H1 (cell line): ENCODE measurements at regions of chr17 and their contacts with region 1.

Region 1: GRCh38 chr17:50397111-50397918 is at the start of gene LRRC59:
- DNase-seq: peak; percentile 23 to 98
- H3K4me3 ChIP-seq: peak within 1 kb of the TSS; percentile 64 to 92 (median 80)
- H3K27ac ChIP-seq: no peak within 1 kb of the TSS; the same call in 1 of the 2 replicates
- H3K4me1 ChIP-seq: no peaks in the 10 kb centered on the region; a peak in 3 of 7 replicates
- H3K27me3 ChIP-seq: no peaks in the 10 kb centered on the region
- CTCF ChIP-seq: peak; percentile 97 to 100 (median 98)
- EP300 ChIP-seq: 0 out of 3 replicates have a peak, but pooled peaks of 1 of the 2 experiments have one; percentile 13
- POLR2A ChIP-seq: peak; percentile 44 to 89
- RAD21 ChIP-seq: peak; percentile 19 to 52; a peak in 3 of 4 replicates
- total RNA-seq, gene LRRC59: 117 TPM in 2 replicates

Region 2: DNA sequence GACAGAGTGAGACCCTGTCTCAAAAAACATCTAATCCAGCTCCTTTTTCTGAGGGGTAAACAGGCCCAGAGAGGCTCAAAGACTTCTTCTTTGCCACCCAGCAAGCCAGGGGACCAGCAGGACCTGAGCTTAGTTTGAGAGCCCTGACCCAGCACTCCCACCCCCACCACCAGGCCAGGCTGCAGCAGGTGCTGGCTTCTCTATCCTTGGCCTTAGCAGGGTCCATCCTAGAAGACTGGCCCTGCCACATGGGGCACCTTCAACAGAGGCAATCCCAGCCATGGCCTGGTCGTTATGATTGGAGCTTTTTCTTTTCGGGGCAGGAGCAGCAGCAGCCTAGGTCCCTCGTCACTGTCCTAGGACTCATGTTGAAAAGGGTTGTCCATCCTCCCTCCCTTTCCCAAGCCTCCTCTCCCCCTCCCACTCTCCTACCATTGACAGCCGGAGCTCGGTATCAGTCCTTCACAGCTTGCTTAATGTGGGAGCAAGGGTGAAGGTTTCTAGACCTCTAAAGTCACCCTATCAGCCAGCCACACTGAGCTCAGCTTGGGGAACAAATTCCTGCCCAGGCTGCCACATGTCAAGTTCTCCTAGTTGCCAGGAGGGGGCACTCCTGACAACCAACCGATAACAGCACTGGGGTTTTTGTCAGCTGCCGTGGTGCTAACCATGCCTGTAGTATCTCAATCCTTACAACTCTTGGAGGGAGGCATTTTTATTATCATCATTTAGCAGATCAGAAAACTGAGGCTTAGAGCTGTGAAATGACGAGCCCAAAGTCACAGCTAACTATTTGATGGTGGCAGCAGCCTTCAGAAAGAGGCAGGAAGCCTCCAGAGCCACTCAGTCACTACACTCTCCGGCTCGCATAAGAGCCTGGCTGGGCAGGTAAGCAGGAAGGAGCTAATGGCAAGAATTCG is 35.5 kb before region 1 on chr17:
- CTCF ChIA-PET with region 1: interaction called, 42 read pairs
- POLR2A ChIA-PET with region 1: interaction called, 313 read pairs
- DNase-seq: peak; percentile 34 to 67
- H3K4me3 ChIP-seq: no peak overlapping the region
- H3K27ac ChIP-seq: no peak overlapping the region
- H3K4me1 ChIP-seq: peaks cover 0 to 27% (median 11%) of the 10 kb centered on the region in 4 experiments; a peak in 6 of 7 replicates
- H3K27me3 ChIP-seq: no peaks in the 10 kb centered on the region
- CTCF ChIP-seq: peak; percentile 63 to 85 (median 79)
- EP300 ChIP-seq: no peak
- POLR2A ChIP-seq: no peak; a peak in 1 of 3 replicates
- RAD21 ChIP-seq: peak; percentile 53 to 65

Region 3: DNA sequence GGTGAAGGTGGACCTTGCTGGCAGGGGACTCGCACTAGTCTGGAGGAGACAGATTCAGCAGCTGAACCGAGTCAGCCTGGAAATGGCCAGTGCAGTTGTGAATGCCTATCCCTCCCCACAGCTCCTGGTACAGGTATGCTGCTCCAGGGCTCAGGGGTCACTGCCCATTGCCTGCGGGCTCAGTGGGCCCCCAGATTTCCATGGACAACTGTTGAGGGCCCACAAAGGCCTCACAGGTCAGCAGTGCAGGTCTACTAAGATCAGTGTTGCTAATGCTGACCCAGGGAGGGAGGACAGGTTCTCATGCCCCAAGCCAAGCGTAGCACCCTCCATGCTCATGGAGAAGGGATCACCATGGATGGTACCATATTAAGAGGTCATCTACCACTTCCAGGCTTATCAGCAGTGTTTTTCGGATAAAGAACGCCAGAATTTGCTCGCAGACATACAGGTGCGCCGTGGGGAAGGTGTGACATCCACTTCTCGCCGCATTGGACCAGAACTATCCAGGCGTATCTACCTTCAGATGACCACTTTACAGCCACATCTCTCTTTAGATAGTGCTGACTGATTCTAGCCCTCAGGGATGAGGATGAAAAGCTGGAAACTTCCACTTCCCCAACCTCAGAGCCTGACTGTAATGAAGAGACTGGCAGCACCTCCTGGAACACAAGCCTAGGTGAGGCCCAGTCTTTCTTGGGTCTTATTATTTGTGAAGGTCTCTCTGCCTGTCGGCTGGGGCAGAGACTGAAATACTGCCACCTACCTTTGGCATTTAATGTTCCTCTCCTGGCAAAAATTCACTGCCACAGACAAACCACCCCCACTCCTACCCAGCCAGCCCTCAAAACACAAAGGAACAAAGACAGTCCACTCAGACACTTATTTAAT is 16.7 kb before region 1 on chr17:
- CTCF ChIA-PET with region 1: interaction called, 30 read pairs
- POLR2A ChIA-PET with region 1: interaction called, 313 read pairs
- DNase-seq: no peak
- H3K4me3 ChIP-seq: no peak overlapping the region
- H3K27ac ChIP-seq: no peak overlapping the region
- H3K4me1 ChIP-seq: no peaks in the 10 kb centered on the region
- H3K27me3 ChIP-seq: no peaks in the 10 kb centered on the region
- CTCF ChIP-seq: peak in 2 of 3 experiments; percentile 13 to 14; a peak in 2 of 4 replicates
- EP300 ChIP-seq: no peak
- POLR2A ChIP-seq: peak in 1 of 2 experiments; percentile 50; a peak in 2 of 3 replicates
- RAD21 ChIP-seq: 0 out of 4 replicates have a peak, but pooled peaks have one; percentile 3 to 9

Region 4: GRCh38 chr17:50425682-50426471 is 28.6 kb after region 1 on chr17 and contains the start of gene ACSF2:
- CTCF ChIA-PET with region 1: interaction called, 87 read pairs
- POLR2A ChIA-PET with region 1: interaction called, 12 read pairs
- DNase-seq: peak; percentile 19 to 72
- H3K4me3 ChIP-seq: peak within 1 kb of the TSS; percentile 55 to 78 (median 68)
- H3K27ac ChIP-seq: no peak within 1 kb of the TSS
- H3K4me1 ChIP-seq: peaks cover 6 to 13% (median 10%) of the 10 kb centered on the region in 4 experiments
- H3K27me3 ChIP-seq: peaks cover 0 to 2% (median 0%) of the 10 kb centered on the region in 4 experiments; a peak in 3 of 7 replicates
- CTCF ChIP-seq: no peak
- EP300 ChIP-seq: no peak
- POLR2A ChIP-seq: no peak
- RAD21 ChIP-seq: no peak
- total RNA-seq, gene ACSF2: 16.1 and 16.3 TPM in 2 replicates

Region 5: GRCh38 chr17:50468409-50469207 is 71.3 kb after region 1 on chr17 and contains the start of gene CHAD:
- CTCF ChIA-PET with region 1: interaction called, 49 read pairs
- POLR2A ChIA-PET with region 1: interaction called, 3 read pairs
- DNase-seq: peak in 1 of 2 experiments; percentile 58
- H3K4me3 ChIP-seq: peak within 1 kb of the TSS; percentile 27 to 62 (median 35)
- H3K27ac ChIP-seq: no peak within 1 kb of the TSS
- H3K4me1 ChIP-seq: peaks cover 0 to 17% (median 7%) of the 10 kb centered on the region in 4 experiments; a peak in 6 of 7 replicates
- H3K27me3 ChIP-seq: peaks cover 8 to 39% (median 27%) of the 10 kb centered on the region in 4 experiments; a peak in 6 of 7 replicates
- CTCF ChIP-seq: no peak
- EP300 ChIP-seq: no peak
- POLR2A ChIP-seq: no peak
- RAD21 ChIP-seq: no peak
- total RNA-seq, gene CHAD: 0.17 TPM in 1 of 2 replicates, not detected in the other

Region 6: DNA sequence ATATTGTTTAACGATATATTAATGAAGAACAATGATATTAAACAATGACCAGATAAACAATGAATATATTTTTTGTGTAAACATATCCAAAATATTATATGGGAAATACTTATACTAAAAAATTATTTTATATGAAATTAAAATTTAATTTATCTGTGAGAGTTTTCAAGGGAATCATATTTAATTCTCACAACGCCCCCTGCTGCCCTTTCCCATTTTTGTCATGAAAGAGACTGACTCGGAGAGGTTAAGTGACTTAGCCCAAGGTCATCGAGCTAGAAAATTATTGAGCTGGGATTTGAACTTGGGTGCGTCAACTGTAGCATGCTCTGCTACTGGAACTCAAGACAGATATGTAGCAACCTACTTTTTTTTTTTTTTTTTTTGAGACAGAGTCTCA is 103.7 kb after region 1 on chr17:
- CTCF ChIA-PET with region 1: interaction called, 12 read pairs
- POLR2A ChIA-PET with region 1: no interaction called
- DNase-seq: no peak
- H3K4me3 ChIP-seq: no peak overlapping the region
- H3K27ac ChIP-seq: no peak overlapping the region
- H3K4me1 ChIP-seq: peaks cover 5 to 9% (median 6%) of the 10 kb centered on the region in 4 experiments; a peak in 6 of 7 replicates
- H3K27me3 ChIP-seq: no peaks in the 10 kb centered on the region
- CTCF ChIP-seq: peak in 2 of 3 experiments; percentile 11 to 43; a peak in 2 of 4 replicates
- EP300 ChIP-seq: no peak
- POLR2A ChIP-seq: no peak
- RAD21 ChIP-seq: 0 out of 4 replicates have a peak, but pooled peaks of 1 of the 2 experiments have one; percentile 13